ENCODE measurements at regions of chr14 and their contacts with region 1.

Region 1: DNA sequence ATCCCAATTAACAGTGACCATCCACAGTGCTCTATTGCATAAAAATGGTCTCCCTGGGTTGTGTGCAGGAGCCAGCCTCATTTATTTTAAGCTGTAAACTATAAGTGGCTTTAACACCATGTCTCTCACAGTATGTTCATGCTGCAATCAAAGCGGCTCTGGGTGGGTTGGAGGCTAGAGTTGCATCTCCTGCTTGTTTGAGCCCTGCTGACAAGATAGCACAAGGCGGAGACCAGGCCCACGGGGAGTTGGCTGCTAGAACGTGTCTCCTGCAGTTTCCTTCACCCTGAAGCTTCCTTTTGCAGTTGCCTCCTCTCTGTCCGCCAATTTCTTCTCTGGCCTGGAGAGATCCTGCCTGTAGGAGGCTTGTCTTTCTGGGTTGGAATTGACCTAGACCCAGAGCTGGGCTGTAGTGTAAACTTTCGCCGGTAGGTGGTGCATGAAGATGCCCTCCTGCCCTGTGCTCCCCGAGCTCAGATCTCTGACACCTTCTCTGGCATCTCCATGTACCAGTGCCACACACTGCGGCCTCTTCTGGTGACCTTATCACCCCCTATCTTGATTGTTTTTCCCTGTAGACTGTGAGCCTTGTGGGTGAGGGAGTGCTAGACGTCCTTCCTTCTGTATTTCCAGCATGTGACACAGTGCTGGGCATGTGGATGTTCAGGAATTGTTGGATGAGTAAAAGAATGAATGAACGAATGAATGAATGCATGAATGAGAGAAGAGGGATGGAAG is 10.3 kb downstream of the OTUB2 start:
- DNase-seq: peak; percentile 85
- H3K4me3 ChIP-seq: no peak overlapping the region
- H3K27ac ChIP-seq: no peak overlapping the region
- H3K4me1 ChIP-seq: peaks cover 0 to 20% (median 8%) of the 10 kb centered on the region in 6 donors
- H3K27me3 ChIP-seq: no peaks in the 10 kb centered on the region
- CTCF ChIP-seq: peak; percentile 77 to 91 (median 87)
- POLR2A ChIP-seq: no peak

Region 2: DNA sequence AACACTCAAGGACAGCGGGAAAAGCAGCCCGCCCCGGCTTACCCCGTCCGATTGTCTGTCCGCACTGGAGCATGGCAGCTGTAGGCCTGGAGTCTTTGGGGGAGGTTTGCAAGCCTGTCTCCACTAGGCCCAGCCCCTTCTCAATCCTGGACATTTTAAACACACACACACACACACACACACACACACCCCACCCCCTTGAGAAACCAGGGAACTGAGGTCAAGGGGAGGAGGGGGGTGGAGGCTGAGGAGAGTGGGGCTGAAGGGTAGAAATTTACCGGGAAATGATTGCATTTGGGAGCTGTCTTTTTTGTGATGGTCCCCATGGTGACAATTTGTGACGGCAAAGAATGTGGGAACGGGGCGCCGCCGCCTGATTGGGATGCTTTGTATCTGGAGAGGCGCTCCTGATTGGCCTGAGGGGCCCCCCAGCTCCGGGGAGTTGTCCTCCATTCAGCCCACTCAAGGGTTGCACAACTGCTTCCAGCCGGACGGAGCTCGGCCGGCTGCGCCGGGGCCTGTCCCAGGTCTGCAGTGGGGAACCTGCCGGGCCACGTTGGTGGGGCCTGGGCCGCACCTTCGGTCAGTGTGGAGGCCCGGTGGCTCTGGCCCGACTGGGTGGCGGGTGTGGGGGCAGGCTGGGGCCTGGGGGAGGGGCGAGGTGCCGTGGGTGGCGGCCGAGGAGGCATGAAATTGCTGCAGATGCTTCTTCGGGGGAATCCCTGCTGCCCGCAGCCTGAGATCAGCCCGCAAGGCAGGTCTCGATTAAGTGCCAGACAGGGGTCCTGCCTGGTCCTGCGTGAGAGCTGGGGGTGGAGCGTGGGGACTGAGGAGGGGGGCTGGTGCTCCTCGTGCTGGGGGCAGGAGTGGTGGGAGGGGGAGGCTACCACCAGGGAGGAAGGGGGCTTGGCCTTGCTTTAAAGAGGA is 109.3 kb before region 1 on chr14 and contains the start of gene FAM181A:
- intact Hi-C with region 1: no loop called
- DNase-seq: no peak
- H3K4me3 ChIP-seq: no peak within 1 kb of the TSS
- H3K27ac ChIP-seq: no peak within 1 kb of the TSS
- H3K4me1 ChIP-seq: no peaks in the 10 kb centered on the region
- H3K27me3 ChIP-seq: peaks cover 0 to 4% (median 0%) of the 10 kb centered on the region in 7 donors
- CTCF ChIP-seq: no peak
- POLR2A ChIP-seq: no peak
- total RNA-seq, gene FAM181A: not detected

Region 3: GRCh38 chr14:94136575-94137331 is 100.3 kb after region 1 on chr14:
- intact Hi-C with region 1: loop called (anchors 2 kb)
- DNase-seq: peak; percentile 93
- H3K4me3 ChIP-seq: no peak overlapping the region
- H3K27ac ChIP-seq: no peak overlapping the region
- H3K4me1 ChIP-seq: peaks cover 0 to 13% (median 5%) of the 10 kb centered on the region in 6 donors
- H3K27me3 ChIP-seq: peaks cover 0 to 10% (median 0%) of the 10 kb centered on the region in 7 donors
- CTCF ChIP-seq: peak; percentile 87 to 99 (median 97)
- POLR2A ChIP-seq: no peak

Region 4: GRCh38 chr14:94175011-94175745 is 138.7 kb after region 1 on chr14:
- intact Hi-C with region 1: loop called (anchors 5 kb)
- DNase-seq: no peak
- H3K4me3 ChIP-seq: peak overlapping the region in 4 of 8 donors; percentile 61 to 86 (median 64)
- H3K27ac ChIP-seq: no peak overlapping the region
- H3K4me1 ChIP-seq: peaks cover 6 to 27% (median 21%) of the 10 kb centered on the region in 6 donors
- H3K27me3 ChIP-seq: peaks cover 0 to 92% (median 42%) of the 10 kb centered on the region in 7 donors
- CTCF ChIP-seq: no peak
- POLR2A ChIP-seq: no peak

Measured in spleen (tissue), 13 donors.